Heart left ventricle (tissue), 16 donors: ENCODE measurements at regions of chr1 and their contacts with region 1.

Region 1: DNA sequence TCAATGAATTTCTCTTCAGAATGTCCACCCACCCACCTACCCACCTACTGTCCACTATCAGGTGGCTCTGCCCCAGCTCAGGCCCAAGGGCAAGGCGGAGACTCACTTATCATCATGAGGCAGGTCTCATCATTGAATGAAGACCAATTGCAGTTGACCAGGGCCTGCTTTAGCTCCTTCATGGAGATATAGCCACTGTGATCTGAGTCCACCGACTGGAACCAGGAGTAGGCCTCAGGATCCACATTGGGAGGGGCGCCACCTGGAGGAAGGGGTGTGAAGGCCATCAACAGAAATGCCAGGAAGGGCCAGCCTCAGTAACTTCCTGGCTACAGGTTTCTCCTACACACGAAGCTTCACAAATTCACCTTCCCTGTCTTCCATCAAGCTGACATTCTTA is 11.6 kb downstream of the PEF1 start:
- DNase-seq: no peak
- ATAC-seq: no peak
- H3K4me3 ChIP-seq: no peak overlapping the region
- H3K27ac ChIP-seq: peak overlapping the region in 4 of 12 donors; percentile 75 to 95 (median 91)
- H3K4me1 ChIP-seq: peaks cover 0 to 95% (median 46%) of the 10 kb centered on the region in 12 donors
- H3K27me3 ChIP-seq: no peaks in the 10 kb centered on the region
- CTCF ChIP-seq: peak in 11 of 12 donors; percentile 17 to 48 (median 36)
- POLR2A ChIP-seq: no peak

Region 2: DNA sequence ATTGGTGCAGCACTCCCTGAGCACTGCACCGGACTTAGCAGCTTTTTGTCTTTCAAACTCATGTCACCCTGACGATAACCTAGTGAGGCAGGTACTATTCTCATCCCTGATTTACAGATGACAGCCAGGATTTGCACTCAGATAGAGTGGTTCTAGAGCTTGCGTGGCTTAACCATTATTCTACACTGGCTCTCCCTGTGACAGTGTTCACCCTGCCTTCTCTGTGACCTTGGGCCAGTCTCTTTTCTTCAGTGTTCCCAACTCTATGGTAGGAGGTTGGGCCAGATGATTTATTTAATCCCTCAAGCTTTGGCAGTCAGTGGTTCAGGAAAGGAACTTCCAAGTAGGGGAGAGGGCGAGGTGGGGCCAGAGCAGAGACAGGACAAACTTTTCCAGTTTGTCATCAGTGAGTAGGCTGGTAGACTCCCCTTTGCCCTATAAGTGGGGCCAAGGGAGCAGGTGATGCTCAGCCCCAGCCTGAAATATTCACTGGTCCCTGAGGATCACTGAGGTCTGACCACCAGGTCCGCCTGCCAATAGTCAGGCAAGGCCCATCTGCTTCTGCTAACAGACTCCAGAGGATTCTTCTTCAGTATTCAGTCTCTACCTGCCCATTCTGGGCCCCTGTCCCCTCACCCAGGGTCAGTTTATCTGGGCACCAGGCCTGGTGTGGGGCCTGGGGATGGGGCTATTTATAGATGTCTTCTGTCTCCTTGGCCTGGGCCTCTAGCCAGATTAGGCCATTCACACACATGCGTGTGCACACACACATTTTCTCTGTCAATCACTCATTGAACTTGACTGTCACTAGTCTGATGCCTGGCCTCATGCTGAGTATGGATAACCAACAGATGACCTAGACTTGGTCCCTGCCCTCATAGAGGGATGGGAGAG is 251.4 kb before region 1 on chr1:
- intact Hi-C with region 1: loop called in 1 of 10 experiments (anchors 10 kb)
- DNase-seq: peak in 4 of 5 donors; percentile 59 to 85 (median 77)
- ATAC-seq: peak; percentile 78 to 90 (median 88)
- H3K4me3 ChIP-seq: no peak overlapping the region
- H3K27ac ChIP-seq: peak overlapping the region; percentile 71 to 97 (median 80)
- H3K4me1 ChIP-seq: peaks cover 0 to 37% (median 10%) of the 10 kb centered on the region in 12 donors
- H3K27me3 ChIP-seq: no peaks in the 10 kb centered on the region
- CTCF ChIP-seq: no peak
- POLR2A ChIP-seq: no peak